ENCODE measurements at regions of chr2 and their contacts with region 1.

Region 1: DNA sequence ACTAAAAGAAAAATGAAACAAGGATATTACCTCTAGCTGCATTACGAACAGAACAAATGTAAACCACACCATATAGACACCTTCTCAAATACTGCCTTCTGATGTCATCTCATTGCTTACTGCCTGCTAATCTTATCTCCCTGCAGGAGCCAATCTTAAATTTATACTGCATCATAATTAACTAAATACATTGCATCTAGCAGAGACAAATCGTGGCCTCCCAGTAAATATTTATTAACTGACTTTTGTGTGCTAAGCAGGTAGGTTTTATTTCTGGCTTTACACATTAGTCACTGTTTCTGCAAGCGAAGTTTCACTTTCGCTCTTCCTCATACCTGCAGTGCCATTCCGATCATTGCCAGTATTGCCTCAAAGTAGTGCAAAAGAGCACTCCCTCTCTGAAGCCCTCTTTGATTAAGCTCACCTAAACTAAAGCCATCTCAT is 67.5 kb downstream of the SPATS2L start:
- DNase-seq: peak; percentile 49
- H3K4me3 Mint-ChIP-seq: peak overlapping the region; percentile 79
- H3K27ac Mint-ChIP-seq: peak overlapping the region; percentile 86
- H3K4me1 Mint-ChIP-seq: peaks cover 55% of the 10 kb centered on the region
- H3K27me3 Mint-ChIP-seq: no peaks in the 10 kb centered on the region

Region 2: GRCh38 chr2:200306196-200306930 is 67.6 kb before region 1 on chr2 and contains the start of gene SPATS2L:
- intact Hi-C with region 1: loop called (anchors 1 kb)
- DNase-seq: peak; percentile 44
- H3K4me3 Mint-ChIP-seq: peak within 1 kb of the TSS; percentile 90
- H3K27ac Mint-ChIP-seq: peak within 1 kb of the TSS; percentile 85
- H3K4me1 Mint-ChIP-seq: peaks cover 35% of the 10 kb centered on the region
- H3K27me3 Mint-ChIP-seq: peaks cover 10% of the 10 kb centered on the region
- total RNA-seq, gene SPATS2L: 35.1 and 38.0 TPM in 2 replicates

Region 3: DNA sequence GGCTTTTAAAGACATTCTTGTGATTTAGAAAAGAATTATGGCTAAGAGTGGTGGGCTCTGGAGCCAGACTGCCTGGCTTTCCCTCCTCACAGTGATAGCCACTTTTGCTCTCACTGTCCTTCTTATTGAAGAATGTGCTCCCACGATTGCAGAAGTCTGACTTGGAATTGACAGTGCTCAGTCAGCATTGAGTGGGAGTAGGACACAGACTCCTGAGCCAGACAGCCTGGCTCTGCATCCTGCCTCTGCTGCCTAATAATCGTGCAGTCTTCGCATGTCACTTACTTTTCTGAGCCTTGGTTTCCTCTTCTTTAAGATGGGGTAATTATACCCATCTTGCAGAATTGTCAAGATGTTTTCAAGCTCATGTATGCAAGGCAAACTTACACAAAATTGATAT is 44.2 kb before region 1 on chr2:
- intact Hi-C with region 1: no loop called
- DNase-seq: no peak
- H3K4me3 Mint-ChIP-seq: no peak overlapping the region
- H3K27ac Mint-ChIP-seq: no peak overlapping the region
- H3K4me1 Mint-ChIP-seq: no peaks in the 10 kb centered on the region
- H3K27me3 Mint-ChIP-seq: no peaks in the 10 kb centered on the region

Region 4: DNA sequence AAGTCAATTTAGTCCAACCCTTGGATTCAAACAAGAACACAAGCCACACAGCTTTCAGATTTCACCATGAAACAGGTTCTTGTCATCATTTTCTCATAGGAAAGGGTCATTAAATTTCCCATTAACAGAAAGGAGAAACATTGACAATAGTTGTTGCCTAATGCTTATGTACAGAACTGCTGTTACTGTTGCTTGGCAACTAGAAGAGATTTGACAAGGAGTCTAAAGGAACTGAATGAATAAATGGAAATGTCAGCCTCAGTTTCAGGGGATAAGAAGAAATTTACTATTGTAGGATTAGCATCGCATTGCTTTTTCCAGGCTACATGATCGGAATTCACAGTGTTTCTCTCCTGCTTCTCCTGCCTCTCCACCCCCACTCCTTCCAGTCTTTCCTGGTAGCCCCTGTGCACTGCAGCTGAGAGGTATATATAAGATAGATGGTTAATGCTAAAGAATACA is 22.8 kb after region 1 on chr2:
- intact Hi-C with region 1: loop called (anchors 2 kb)
- DNase-seq: no peak
- H3K4me3 Mint-ChIP-seq: no peak overlapping the region
- H3K27ac Mint-ChIP-seq: no peak overlapping the region
- H3K4me1 Mint-ChIP-seq: peaks cover 12% of the 10 kb centered on the region
- H3K27me3 Mint-ChIP-seq: no peaks in the 10 kb centered on the region

Region 5: DNA sequence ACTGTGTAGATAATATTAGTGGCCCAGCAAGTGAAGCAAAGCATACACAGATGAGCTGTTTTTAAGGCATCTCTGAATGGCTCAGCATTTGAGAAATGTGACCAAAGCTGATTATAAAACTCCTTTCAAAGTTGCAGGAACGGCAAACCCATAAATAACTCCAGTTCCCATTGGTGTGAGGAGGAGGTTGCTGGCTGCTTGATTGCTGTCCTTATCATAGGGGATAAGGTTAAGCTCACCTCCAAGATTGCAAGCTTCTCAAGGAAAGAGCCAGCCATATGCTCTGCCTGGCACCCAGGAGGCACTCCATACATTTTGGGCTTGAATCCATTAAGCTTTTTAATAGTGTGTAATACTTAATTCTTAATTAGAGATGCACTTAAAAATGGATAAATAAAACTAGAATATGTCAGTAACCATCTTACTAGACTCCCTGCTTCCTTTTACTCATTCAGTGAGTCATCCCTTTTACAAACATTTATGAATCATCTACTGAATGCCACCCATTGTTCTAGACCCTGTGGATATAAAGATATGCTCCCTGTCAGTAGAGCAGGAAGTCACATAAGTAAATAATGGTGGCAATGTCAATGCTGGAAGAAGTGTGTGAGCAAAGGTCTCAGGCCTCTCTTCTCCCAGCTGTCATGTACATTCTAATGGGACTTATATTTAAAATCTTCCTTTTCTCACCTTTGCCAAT is 31.8 kb after region 1 on chr2:
- intact Hi-C with region 1: loop called (anchors 1 kb)
- DNase-seq: no peak
- H3K4me3 Mint-ChIP-seq: no peak overlapping the region
- H3K27ac Mint-ChIP-seq: peak overlapping the region; percentile 25
- H3K4me1 Mint-ChIP-seq: peaks cover 68% of the 10 kb centered on the region
- H3K27me3 Mint-ChIP-seq: no peaks in the 10 kb centered on the region

Region 6: DNA sequence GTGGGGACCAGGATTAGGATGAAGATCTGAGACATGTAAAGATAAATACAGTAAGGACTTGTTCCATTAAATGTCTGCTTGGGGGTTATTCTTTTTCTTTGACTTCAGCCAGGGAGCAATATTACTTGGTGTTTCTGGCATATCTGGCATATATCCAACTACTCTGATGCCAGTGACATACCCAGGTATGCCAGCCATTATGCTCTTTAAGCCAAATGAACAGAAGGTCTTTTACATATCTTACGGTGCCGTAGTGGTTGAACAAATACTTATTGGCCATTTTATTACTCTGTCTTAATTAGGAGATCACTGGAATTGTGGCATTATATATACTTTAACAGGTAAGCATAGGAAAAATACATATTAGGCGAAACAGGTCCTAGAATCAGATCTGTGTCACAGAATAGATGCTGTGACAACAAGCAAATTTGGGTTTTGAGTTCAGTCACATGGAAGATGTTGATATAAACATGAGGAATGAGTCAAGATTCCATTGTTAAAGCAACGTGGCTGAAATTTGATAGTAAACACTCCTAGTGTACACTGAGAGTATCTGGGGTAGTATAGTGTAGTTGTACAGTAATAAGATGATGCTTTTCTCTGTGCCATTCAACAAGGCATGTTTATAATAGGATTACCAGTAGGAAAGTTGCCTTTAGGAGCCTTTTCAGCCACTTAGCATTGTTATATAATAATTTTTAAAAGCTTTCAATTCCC is 73.3 kb after region 1 on chr2:
- intact Hi-C with region 1: loop called (anchors 2 kb)
- DNase-seq: no peak
- H3K4me3 Mint-ChIP-seq: peak overlapping the region; percentile 35
- H3K27ac Mint-ChIP-seq: peak overlapping the region; percentile 72
- H3K4me1 Mint-ChIP-seq: peaks cover 22% of the 10 kb centered on the region
- H3K27me3 Mint-ChIP-seq: no peaks in the 10 kb centered on the region

Region 7: DNA sequence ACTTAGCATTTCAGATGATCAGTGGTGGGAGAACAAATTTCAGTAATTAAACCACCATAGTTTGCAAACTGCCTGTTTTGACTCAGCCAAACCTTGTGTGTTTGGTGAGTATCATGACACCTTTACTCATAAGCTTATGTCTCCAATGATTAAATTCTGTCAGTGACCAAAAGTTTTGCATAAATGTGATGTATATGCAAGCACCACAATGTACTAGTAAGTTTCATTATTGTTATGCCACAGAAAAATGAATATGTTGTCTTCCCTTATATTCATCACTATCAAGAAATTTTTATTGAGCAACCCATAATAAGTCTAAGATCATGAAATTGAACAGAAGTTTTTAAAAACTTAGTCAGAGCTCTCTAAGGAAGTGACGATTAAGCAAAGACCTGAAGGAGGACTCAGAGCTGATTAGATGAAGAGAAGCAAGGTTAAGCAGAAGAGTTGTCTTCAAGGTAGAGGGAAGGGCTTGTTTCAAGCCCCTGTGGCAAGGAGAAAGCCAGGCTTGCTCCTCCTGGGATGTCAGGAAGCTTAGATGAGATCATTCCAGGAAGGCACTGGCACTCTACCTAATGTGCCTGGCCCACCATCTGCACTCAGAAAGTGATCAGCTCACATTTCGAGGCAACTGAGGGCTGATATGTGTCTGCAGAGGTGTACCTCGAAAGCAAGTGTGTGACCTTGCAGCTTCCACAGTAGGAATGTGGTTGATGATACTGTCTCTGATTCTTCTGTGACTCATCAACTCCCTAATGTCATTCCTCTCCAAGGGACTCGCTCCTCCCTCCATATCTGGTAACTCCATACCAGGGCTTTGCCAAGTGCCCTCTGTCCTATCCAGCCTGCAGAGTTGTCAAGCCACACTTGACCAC is 81.2 kb after region 1 on chr2:
- intact Hi-C with region 1: loop called (anchors 1 kb)
- DNase-seq: no peak
- H3K4me3 Mint-ChIP-seq: peak overlapping the region; percentile 31
- H3K27ac Mint-ChIP-seq: peak overlapping the region; percentile 18
- H3K4me1 Mint-ChIP-seq: peaks cover 27% of the 10 kb centered on the region
- H3K27me3 Mint-ChIP-seq: no peaks in the 10 kb centered on the region